ENCODE measurements at regions of chr14 and their contacts with region 1.

Region 1: GRCh38 chr14:75982266-75983018 is 647 bp upstream of the TGFB3 start:
- DNase-seq: peak; percentile 71 to 96 (median 90)

Region 2: GRCh38 chr14:75794615-75795038 is 187.8 kb before region 1 on chr14:
- intact Hi-C with region 1: loop called (anchors 5 kb)
- DNase-seq: peak in 1 of 42 donors; percentile 29

Region 3: DNA sequence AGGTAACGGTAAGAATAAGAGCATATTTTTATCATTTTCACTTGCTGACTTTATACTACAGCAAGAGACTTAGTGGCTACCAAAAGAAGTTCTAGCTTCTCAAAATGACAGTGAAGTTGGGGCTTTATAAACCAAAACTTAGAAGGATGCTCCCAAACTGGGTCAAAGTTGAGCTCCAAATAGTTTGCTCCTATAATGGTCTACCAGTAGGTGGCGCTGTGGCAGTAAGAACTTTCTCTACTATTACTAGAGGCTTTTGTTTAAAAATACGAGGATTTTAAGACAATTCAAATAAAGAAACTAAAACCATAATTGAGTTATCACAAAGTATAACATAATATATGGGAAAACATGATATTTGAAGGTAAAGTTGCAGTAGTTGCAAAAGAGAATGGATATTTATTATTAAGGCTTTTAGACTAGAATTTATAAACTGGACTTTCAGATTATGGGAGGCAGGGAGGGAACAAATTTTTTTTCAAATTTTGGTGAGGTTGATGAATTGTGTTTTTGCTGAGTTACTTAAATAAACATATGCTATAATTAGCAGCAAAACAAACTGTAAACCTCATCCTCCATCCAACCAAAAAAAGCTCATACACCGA is 75.7 kb before region 1 on chr14:
- intact Hi-C with region 1: loop called (anchors 2 kb)
- DNase-seq: peak in 41 of 42 donors; percentile 8 to 95 (median 80)

Region 4: GRCh38 chr14:76067536-76067935 is 85.1 kb after region 1 on chr14:
- intact Hi-C with region 1: no loop called
- DNase-seq: no peak

Measured in head of caudate nucleus (tissue), 42 donors.